MCF 10A (cell line): ENCODE measurements at regions of chr9 and their contacts with region 1.

Region 1: DNA sequence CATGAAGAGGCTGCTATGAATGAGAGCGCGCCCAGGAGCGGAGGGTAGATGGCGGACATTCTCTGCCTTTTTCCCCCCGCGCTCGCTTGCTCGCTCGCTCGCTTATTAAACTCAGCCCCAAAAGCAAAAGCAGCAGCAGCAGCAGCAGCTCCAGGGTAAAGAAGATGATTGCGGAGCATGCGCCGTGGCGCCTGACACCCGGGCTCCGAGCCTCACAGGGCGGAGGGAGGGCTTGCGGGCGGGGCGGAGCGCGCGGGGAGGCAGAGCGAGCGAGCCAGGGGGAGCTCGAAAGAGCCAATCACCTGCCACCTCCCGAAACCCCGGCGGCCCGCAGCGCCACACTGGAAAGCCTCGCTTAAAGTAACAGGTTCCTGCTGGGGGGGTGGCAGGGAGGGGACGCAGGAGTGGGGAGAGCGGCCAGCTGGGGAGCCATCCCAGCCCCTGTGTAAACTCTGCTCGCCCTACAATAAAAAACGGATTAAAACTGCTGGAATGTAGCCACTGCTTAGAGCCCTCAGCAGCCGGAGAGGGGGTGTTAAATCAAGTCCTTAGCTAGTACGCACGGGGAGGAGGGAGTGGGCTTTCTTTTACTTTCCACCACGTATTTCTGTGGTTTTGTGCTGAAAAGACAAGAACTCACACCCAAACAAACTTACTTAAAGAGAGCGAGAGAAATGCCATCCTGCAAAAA is at the start of gene MLLT3:
- DNase-seq: peak; percentile 90
- H3K4me3 Mint-ChIP-seq: peak within 1 kb of the TSS; percentile 81
- H3K27ac Mint-ChIP-seq: peak within 1 kb of the TSS; percentile 42
- H3K4me1 Mint-ChIP-seq: peaks cover 20% of the 10 kb centered on the region
- H3K27me3 Mint-ChIP-seq: peaks cover 50% of the 10 kb centered on the region
- CTCF ChIP-seq: no peak
- total RNA-seq, gene MLLT3: 0.66 and 1.2 TPM in 2 replicates

Region 2: DNA sequence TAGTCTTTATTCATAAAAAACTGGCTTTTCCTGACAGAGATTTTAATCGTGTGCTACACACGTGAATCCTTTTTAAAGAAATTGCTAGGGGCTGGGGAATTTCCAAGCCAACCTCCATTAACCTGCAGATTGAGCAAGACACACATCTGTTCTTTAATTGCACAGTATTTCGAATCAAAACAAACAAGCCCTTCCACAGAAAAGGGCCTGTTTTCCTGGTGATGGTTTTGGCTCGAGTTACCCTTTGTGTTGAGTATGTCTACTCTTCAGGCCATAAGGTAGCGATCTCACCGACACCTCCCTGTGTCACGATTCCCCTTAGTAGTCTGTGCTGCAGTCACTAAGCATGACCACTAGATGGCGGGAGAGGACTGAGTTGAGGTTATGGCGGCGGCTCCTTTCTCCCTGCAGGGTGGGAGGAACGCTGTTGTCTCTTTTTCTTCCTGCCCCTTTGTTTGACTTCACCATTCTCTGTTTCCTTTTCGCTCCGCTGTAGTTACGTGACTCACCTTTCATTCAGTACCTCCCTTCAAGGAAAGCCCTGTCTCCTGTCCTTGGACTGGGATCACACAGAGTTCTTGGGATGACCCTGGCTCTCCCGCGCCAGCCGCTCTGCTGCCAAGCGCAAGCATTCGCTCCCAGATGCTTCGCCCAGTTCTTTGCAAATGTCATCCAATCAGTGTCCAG is 696.5 kb before region 1 on chr9:
- CTCF ChIA-PET with region 1: interaction called, 5 read pairs
- POLR2A ChIA-PET with region 1: interaction called, 4 read pairs
- intact Hi-C with region 1: loop called (anchors 2 kb)
- DNase-seq: peak; percentile 80
- H3K4me3 Mint-ChIP-seq: peak overlapping the region; percentile 60
- H3K27ac Mint-ChIP-seq: no peak overlapping the region
- H3K4me1 Mint-ChIP-seq: no peaks in the 10 kb centered on the region
- H3K27me3 Mint-ChIP-seq: peaks cover 24% of the 10 kb centered on the region
- CTCF ChIP-seq: peak; percentile 95

Region 3: DNA sequence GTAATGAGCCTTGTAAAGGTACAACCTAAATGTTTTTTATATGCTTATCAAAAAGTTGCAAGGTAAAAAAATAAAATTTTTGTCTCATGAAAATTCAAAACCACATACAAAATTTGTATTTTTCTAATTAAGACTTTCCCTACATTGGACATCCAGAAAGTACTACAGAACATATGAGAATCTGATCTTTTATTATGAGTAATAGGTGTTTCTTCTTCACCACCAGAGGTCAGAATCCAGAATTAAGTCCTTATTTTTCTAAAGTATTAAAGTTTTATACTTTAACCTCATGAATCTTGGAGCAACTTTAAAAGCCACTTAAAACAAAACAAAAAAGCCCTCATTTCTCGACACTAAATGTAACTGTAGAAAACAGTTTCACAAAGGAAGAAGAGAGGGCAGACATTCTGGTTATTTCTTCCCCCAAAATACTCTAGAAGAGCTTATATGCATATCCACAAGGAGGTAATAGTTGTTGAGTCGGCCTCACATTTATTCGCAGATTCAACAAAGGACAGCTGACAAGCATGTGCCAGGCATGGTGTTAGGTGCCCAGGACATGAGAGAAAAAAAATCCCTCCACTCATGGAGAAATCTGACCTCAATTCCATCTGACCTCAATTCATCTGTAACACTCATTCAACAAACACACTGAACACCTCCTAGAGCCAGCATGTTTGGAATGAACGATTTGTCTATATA is 69.5 kb before region 1 on chr9:
- CTCF ChIA-PET with region 1: interaction called, 7 read pairs
- POLR2A ChIA-PET with region 1: interaction called, 4 read pairs
- intact Hi-C with region 1: loop called (anchors 2 kb)
- DNase-seq: no peak
- H3K4me3 Mint-ChIP-seq: no peak overlapping the region
- H3K27ac Mint-ChIP-seq: no peak overlapping the region
- H3K4me1 Mint-ChIP-seq: peaks cover 9% of the 10 kb centered on the region
- H3K27me3 Mint-ChIP-seq: peaks cover 65% of the 10 kb centered on the region
- CTCF ChIP-seq: no peak

Region 4: DNA sequence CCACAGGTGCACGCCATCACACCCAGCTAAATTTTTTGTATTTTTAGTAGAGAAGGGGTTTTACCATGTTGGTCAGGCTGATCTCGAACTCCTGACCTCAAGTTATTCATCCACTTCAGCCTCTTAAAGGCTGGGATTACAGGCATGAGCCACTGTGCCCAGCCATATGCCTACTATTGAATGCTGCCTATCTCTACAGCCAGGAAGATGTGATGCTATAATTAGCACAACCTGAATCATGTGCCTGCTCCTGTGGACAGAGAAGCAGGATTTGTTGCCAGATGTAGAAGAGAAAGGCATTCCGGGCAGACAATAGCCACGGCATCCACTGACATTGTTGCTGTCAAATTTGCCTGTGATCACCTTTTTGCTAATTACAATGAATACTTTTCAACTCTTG is 24.2 kb after region 1 on chr9:
- CTCF ChIA-PET with region 1: interaction called, 13 read pairs
- POLR2A ChIA-PET with region 1: no interaction called
- intact Hi-C with region 1: no loop called
- DNase-seq: no peak
- H3K4me3 Mint-ChIP-seq: no peak overlapping the region
- H3K27ac Mint-ChIP-seq: no peak overlapping the region
- H3K4me1 Mint-ChIP-seq: no peaks in the 10 kb centered on the region
- H3K27me3 Mint-ChIP-seq: peaks cover 43% of the 10 kb centered on the region
- CTCF ChIP-seq: no peak

Region 5: DNA sequence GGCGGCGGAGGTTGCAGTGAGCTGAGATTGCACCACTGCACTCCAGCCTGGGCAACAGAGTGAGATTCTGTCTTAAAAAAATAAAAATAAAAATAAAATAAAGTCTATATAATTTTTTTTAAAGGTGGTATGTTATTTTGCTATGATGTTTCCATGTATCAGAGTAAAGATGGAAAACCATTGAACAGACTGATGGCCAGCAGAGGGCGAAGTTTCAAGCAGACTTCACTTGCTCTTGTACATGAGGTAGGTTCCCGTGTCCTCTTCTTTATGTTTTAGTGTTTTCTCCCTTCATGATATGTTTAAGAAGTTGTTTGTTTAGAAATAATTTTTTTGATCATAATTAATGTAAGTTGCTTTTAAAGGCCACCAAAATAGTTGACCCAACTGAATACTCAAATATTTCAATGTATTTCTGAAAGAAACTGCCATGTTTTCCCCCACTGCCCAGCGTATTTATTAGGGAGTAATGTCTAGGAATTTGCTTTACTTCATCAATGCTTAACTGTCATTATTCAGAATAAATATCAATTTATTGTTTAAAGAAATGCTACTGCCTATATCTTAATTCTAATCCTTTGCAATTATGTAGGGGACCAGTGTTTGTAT is 262.6 kb after region 1 on chr9:
- CTCF ChIA-PET with region 1: interaction called, 13 read pairs
- POLR2A ChIA-PET with region 1: interaction called, 3 read pairs
- intact Hi-C with region 1: loop called (anchors 5 kb)
- DNase-seq: peak; percentile 65
- H3K4me3 Mint-ChIP-seq: no peak overlapping the region
- H3K27ac Mint-ChIP-seq: no peak overlapping the region
- H3K4me1 Mint-ChIP-seq: no peaks in the 10 kb centered on the region
- H3K27me3 Mint-ChIP-seq: no peaks in the 10 kb centered on the region
- CTCF ChIP-seq: peak; percentile 48